Activated CD4-positive, alpha-beta T cell treated with anti-CD3 and anti-CD28 coated beads for 36 hours (primary cell): ENCODE measurements at regions of chr2 and their contacts with region 1.

Region 1: DNA sequence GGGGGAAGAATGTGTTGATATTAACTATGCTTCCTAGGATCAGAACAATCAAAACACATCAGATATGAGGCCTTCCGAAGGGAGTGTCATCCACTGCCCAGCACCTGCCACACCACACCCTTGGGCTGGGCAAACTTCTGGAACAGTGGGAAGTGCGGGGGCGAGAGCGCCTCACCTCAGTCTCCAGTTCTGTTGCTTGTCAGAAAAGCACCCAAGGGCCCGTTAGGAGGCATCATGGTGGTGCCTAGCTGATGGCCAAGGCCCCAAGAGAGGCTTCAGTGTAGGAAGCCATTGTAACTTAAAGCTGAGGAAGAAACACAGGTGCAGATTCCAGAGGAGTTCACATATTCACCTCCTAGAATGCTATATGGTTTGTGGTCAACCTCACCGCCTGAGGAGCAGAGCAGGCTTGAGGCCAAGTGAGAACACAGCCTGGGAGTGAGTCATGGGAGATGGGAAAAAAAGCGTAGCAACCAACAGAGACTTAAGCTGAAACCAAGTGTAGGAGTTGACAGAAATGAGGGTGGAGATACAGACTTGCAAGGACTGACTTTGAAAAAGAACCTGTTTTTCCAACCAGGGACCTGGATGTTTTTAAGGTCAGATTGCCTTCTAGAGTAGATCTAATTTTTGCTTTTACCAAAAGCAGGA is 85.2 kb upstream of the ATL2 start:
- DNase-seq: peak; percentile 81
- ATAC-seq: peak; percentile 98
- H3K4me3 Mint-ChIP-seq: peak overlapping the region; percentile 11
- H3K27ac Mint-ChIP-seq: peak overlapping the region; percentile 49
- H3K4me1 Mint-ChIP-seq: peaks cover 10% of the 10 kb centered on the region
- H3K27me3 Mint-ChIP-seq: peaks cover 18% of the 10 kb centered on the region

Region 2: GRCh38 chr2:38315707-38316333 is 146.4 kb before region 1 on chr2:
- CTCF ChIA-PET with region 1: interaction called, 9 read pairs
- POLR2A ChIA-PET with region 1: no interaction called
- intact Hi-C with region 1: loop called (anchors 1 kb)
- DNase-seq: peak; percentile 26
- ATAC-seq: peak; percentile 100
- H3K4me3 Mint-ChIP-seq: no peak overlapping the region
- H3K27ac Mint-ChIP-seq: no peak overlapping the region
- H3K4me1 Mint-ChIP-seq: peaks cover 16% of the 10 kb centered on the region
- H3K27me3 Mint-ChIP-seq: no peaks in the 10 kb centered on the region

Region 3: DNA sequence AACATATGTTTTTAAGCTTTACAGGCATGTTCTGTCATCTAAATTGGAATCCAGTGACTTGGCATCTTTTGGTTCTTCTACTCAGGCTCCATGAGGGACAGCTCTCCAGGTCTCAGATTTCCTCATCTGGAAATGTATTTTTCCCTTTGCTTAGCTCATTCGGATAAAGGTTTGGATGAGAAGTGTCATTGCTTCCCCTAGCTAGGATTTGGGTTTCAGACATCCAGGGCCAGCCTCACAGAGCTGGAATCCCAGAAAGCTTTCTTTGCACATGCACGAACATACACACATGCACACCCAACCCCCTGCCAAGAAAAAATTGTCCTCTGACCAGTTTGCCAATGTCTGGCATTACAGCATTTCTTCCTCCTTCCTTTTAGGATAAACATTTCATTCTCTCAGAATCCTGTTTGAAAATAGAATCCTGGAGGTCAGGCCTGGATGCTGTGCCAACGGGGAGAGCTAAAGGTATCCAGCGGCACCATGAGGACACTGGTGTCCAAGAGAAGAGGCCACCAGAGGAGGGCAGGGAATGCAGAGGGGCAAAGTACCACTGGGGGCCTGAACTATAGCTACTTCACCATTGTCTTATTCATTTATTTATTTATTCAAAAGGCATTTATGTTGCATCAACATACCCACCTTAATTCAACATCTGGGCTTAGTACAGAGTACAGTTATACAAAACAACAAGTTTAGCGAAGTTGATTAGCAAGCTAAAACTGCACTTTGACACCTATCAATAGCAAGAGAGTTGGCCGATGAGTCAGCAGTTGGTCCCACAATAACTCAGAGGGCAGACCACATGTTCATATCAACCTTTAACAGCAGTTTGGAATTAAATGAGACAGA is 12.7 kb after region 1 on chr2:
- CTCF ChIA-PET with region 1: interaction called, 10 read pairs
- POLR2A ChIA-PET with region 1: interaction called, 4 read pairs
- intact Hi-C with region 1: loop called (anchors 1 kb)
- DNase-seq: peak; percentile 67
- ATAC-seq: peak; percentile 80
- H3K4me3 Mint-ChIP-seq: no peak overlapping the region
- H3K27ac Mint-ChIP-seq: no peak overlapping the region
- H3K4me1 Mint-ChIP-seq: peaks cover 28% of the 10 kb centered on the region
- H3K27me3 Mint-ChIP-seq: peaks cover 21% of the 10 kb centered on the region